ENCODE measurements at regions of chr17 and their contacts with region 1.

Region 1: GRCh38 chr17:75693500-75694481 is 26.7 kb downstream of the SAP30BP start:
- DNase-seq: no peak
- H3K4me3 ChIP-seq: peak overlapping the region in 1 of 4 experiments; percentile 19; a peak in 4 of 8 replicates
- H3K27ac ChIP-seq: peak overlapping the region; percentile 64; the same call in 1 of the 2 replicates
- H3K4me1 ChIP-seq: peaks cover 3 to 21% (median 7%) of the 10 kb centered on the region in 4 experiments
- H3K27me3 ChIP-seq: no peaks in the 10 kb centered on the region
- CTCF ChIP-seq: peak in 2 of 3 experiments; percentile 9 to 26; a peak in 2 of 4 replicates
- EP300 ChIP-seq: no peak
- POLR2A ChIP-seq: no peak
- RAD21 ChIP-seq: peak in 1 of 2 experiments; percentile 20; a peak in 1 of 4 replicates

Region 2: DNA sequence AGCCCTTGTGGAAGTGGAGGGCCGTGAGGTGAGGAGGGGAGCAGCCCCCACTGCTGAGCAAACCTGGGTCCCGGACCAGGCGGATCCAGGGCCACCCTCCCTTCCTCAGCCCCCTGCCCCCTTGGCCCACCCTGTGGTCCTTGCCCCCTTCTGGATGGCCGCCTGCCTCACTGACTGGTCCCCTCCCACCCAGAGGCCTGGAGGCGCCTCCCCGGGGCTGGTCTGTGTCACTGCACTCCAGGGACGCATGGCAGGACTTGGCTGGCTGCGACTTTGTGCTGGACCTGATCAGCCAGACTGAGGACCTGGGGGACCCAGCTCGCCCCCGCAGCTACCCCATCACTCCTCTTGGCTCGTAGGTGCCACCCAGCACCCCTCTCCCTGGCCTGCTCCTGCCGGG is 79.8 kb before region 1 on chr17:
- CTCF ChIA-PET with region 1: no interaction called
- POLR2A ChIA-PET with region 1: no interaction called
- DNase-seq: no peak
- H3K4me3 ChIP-seq: no peak overlapping the region
- H3K27ac ChIP-seq: no peak overlapping the region
- H3K4me1 ChIP-seq: no peaks in the 10 kb centered on the region
- H3K27me3 ChIP-seq: no peaks in the 10 kb centered on the region
- CTCF ChIP-seq: peak; percentile 55 to 64 (median 59)
- EP300 ChIP-seq: no peak
- POLR2A ChIP-seq: no peak
- RAD21 ChIP-seq: peak; percentile 31 to 47; a peak in 3 of 4 replicates

Region 3: GRCh38 chr17:75679706-75680442 is 13.9 kb before region 1 on chr17:
- CTCF ChIA-PET with region 1: interaction called, 17 read pairs
- POLR2A ChIA-PET with region 1: interaction called, 6 read pairs
- DNase-seq: no peak
- H3K4me3 ChIP-seq: no peak overlapping the region
- H3K27ac ChIP-seq: no peak overlapping the region
- H3K4me1 ChIP-seq: no peaks in the 10 kb centered on the region
- H3K27me3 ChIP-seq: no peaks in the 10 kb centered on the region
- CTCF ChIP-seq: no peak
- EP300 ChIP-seq: no peak
- POLR2A ChIP-seq: no peak
- RAD21 ChIP-seq: no peak

Region 4: DNA sequence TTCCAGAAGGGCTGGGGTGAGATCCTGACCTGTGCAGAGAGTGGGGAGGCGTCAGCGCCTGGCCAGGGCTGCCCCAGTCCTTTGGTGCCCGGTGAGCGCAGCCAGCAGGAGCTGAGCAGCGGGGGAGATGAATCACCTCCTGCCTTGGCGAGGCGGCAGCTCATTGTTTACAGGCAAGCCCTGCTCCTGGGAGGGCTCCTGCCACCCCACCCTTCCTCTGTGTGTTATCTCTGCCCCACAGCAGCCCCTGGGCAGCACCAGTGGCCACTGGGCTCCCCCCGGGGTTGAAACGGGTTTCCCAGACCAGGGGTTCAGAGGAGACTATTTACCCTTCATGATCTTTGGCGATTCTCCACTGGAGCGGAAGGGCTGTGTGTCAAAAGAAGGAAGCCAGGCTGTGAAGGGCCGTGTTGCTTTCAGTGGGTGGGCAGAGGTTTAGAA is 13.4 kb after region 1 on chr17:
- CTCF ChIA-PET with region 1: interaction called, 39 read pairs
- POLR2A ChIA-PET with region 1: interaction called, 5 read pairs
- DNase-seq: no peak
- H3K4me3 ChIP-seq: no peak overlapping the region
- H3K27ac ChIP-seq: no peak overlapping the region
- H3K4me1 ChIP-seq: no peaks in the 10 kb centered on the region
- H3K27me3 ChIP-seq: no peaks in the 10 kb centered on the region
- CTCF ChIP-seq: no peak
- EP300 ChIP-seq: no peak
- POLR2A ChIP-seq: no peak
- RAD21 ChIP-seq: no peak

Measured in H1 (cell line).